ENCODE measurements at regions of chr12 and their contacts with region 1.

Region 1: GRCh38 chr12:108875682-108876361 is 4.1 kb upstream of the DAO start:
- DNase-seq: no peak
- H3K4me3 Mint-ChIP-seq: no peak overlapping the region
- H3K27ac Mint-ChIP-seq: no peak overlapping the region
- H3K4me1 Mint-ChIP-seq: peaks cover 16% of the 10 kb centered on the region
- H3K27me3 Mint-ChIP-seq: no peaks in the 10 kb centered on the region

Region 2: GRCh38 chr12:108717243-108717642 is 158.6 kb before region 1 on chr12:
- CTCF ChIA-PET with region 1: no interaction called
- POLR2A ChIA-PET with region 1: interaction called, 10 read pairs
- DNase-seq: no peak
- H3K4me3 Mint-ChIP-seq: no peak overlapping the region
- H3K27ac Mint-ChIP-seq: no peak overlapping the region
- H3K4me1 Mint-ChIP-seq: peaks cover 2% of the 10 kb centered on the region
- H3K27me3 Mint-ChIP-seq: no peaks in the 10 kb centered on the region

Region 3: DNA sequence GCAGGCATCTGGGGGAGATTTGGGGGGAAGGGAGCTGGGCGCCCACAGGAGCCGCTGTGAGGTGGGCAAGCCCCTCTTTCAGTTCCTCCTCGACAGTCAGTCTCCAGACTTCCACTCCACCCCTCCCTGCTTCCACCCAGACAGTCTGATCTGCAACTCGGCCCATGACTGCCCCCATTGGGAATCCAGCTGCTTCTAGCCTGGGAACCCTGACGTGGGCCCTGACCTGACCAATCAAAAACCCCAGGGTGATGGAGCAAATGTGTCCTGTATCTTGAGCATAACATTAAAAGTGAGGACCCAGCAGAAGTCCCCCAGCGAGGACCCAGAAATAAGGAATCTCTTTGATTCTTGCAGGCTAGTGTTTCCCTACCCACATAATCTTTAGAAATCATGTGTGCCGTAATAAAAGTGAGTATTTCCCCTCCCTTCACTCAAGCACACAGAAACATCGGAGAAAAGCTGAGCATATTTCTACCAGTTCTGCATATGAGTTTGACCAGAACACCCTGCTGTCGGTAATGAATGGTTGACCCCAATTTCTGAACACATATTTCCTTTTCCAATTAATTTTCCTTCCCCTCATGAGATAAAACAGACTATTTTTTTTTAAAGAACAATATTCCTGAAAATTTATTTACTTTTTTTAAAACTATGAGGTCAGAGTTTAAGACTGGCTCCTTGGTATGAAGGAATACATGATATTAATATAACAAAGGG is 24.8 kb before region 1 on chr12:
- CTCF ChIA-PET with region 1: no interaction called
- POLR2A ChIA-PET with region 1: no interaction called
- DNase-seq: no peak
- H3K4me3 Mint-ChIP-seq: no peak overlapping the region
- H3K27ac Mint-ChIP-seq: no peak overlapping the region
- H3K4me1 Mint-ChIP-seq: peaks cover 26% of the 10 kb centered on the region
- H3K27me3 Mint-ChIP-seq: no peaks in the 10 kb centered on the region

Measured in activated CD4-positive, alpha-beta T cell treated with anti-CD3 and anti-CD28 coated beads, Interleukin-2, amount 10 ng/mL, durations not matched to agents 7 days and 5 days (primary cell).